Breast epithelium (tissue), 4 donors: ENCODE measurements at regions of chr11 and their contacts with region 1.

Region 1: DNA sequence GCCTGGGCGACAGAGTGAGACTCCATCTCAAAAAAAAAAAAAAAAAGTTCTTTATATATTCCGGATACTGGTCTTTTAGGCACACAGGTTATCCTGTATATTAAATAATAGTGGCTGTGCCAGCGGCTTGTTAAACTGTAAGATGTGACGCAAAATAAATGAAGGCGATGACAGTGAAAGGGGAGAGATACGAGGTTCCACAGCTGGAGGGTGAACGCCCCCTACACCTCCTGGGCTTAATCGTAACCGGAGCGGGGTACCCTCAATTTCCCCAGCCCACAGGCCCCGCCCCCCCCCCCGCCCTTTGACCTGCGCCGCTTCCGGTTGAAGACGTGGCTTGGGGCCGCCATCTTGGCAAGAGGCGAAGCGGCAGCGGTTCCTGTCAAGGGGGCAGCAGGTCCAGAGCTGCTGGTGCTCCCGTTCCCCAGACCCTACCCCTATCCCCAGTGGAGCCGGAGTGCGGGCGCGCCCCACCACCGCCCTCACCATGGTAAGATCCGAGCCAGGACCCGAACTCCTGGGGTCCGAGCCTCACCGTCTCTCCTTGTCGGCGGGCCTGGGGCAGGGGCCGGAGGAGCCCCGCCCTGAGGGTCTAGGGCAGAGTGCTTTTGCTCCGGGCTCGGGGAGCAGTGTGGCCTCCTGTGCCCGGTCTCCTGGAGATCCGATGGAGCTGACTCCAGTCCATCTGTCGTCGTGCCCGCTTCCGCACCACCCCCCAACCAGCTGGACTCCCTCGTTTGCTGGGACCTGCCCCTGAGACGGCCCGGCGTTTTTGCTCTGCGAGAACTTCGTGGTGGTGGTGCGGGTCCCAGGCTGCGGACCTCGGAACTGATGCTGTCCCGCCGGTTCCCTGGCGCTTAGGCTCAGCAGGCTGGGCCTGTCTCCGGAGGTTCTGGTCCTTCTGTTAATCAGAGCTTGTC is at the start of gene ARCN1:
- DNase-seq: peak; percentile 71 to 74
- H3K4me3 ChIP-seq: peak within 1 kb of the TSS; percentile 98 to 100 (median 99)
- H3K27ac ChIP-seq: peak within 1 kb of the TSS; percentile 99
- H3K4me1 ChIP-seq: peaks cover 5 to 25% of the 10 kb centered on the region in 2 donors
- H3K27me3 ChIP-seq: no peaks in the 10 kb centered on the region
- CTCF ChIP-seq: no peak
- POLR2A ChIP-seq: no peak
- total RNA-seq, gene ARCN1: 94.1 to 99.1 (median 98.6) TPM

Region 2: DNA sequence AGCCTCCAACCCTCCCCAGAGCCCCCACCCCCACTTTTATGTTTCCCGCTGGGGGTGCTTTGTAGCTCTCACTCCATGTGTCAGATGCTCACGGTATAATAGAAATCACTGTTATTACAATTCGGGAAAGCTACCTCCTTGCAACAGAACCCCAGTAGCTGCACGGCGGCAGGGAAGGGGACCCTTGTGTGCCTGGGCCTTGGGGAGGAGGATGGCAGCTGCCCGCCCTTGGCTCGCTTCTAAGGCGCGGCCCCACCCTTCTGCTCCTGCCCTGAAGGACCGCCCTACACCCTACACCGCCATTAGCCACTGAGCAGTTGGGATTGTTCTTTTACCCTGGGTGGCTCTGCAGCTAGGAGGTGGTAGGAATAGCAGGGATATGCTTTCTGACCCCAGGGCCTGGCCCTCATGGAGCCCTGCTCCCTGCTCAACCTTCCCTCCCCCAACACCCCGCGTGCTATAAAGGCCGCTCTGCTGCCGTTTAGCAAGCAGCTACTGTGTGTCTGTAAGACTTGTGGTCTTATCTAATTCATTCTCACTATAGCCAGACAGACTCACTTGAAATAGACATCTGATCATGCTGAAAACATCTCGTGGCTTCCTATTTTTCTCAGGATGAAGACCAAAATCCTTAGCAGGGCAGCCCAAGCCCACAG is 1025.0 kb before region 1 on chr11:
- intact Hi-C with region 1: loop called (anchors 10 kb)
- DNase-seq: no peak
- H3K4me3 ChIP-seq: no peak overlapping the region
- H3K27ac ChIP-seq: no peak overlapping the region
- H3K4me1 ChIP-seq: no peaks in the 10 kb centered on the region
- H3K27me3 ChIP-seq: no peaks in the 10 kb centered on the region
- CTCF ChIP-seq: no peak
- POLR2A ChIP-seq: no peak

Region 3: GRCh38 chr11:118587952-118588351 is 15.6 kb after region 1 on chr11:
- intact Hi-C with region 1: no loop called
- DNase-seq: no peak
- H3K4me3 ChIP-seq: no peak overlapping the region
- H3K27ac ChIP-seq: no peak overlapping the region
- H3K4me1 ChIP-seq: no peaks in the 10 kb centered on the region
- H3K27me3 ChIP-seq: no peaks in the 10 kb centered on the region
- CTCF ChIP-seq: no peak
- POLR2A ChIP-seq: no peak